GM12878 (cell line): ENCODE measurements at regions of chr6 and their contacts with region 1.

Region 1: GRCh38 chr6:75284632-75285286 is at the start of gene TMEM30A:
- DNase-seq: peak; percentile 100
- ATAC-seq: peak; percentile 80
- H3K4me3 ChIP-seq: peak within 1 kb of the TSS; percentile 94
- H3K27ac ChIP-seq: peak within 1 kb of the TSS; percentile 80
- H3K4me1 ChIP-seq: no peaks in the 10 kb centered on the region
- H3K27me3 ChIP-seq: no peaks in the 10 kb centered on the region
- CTCF ChIP-seq: no peak
- EP300 ChIP-seq: peak in 1 of 2 experiments; percentile 71; a peak in 1 of 4 replicates
- POLR2A ChIP-seq: peak; percentile 96
- RAD21 ChIP-seq: no peak
- polyA plus RNA-seq, gene TMEM30A: 11.9 to 23.1 TPM

Region 2: GRCh38 chr6:74598473-74599393 is 686.0 kb before region 1 on chr6:
- CTCF ChIA-PET with region 1: no interaction called
- POLR2A ChIA-PET with region 1: no interaction called
- RAD21 ChIA-PET with region 1: no interaction called
- SMC1A ChIA-PET with region 1: no interaction called
- in situ Hi-C with region 1: no loop called
- intact Hi-C with region 1: no loop called
- DNase-seq: peak; percentile 81
- ATAC-seq: peak; percentile 94
- H3K4me3 ChIP-seq: peak overlapping the region; percentile 28; the same call in 1 of the 2 replicates
- H3K27ac ChIP-seq: peak overlapping the region; percentile 60
- H3K4me1 ChIP-seq: peaks cover 17% of the 10 kb centered on the region
- H3K27me3 ChIP-seq: no peaks in the 10 kb centered on the region
- CTCF ChIP-seq: no peak
- EP300 ChIP-seq: peak; percentile 96 to 98
- POLR2A ChIP-seq: no peak
- RAD21 ChIP-seq: 0 out of 2 replicates have a peak, but pooled peaks have one; percentile 12

Region 3: GRCh38 chr6:75243333-75244062 is 41.3 kb before region 1 on chr6 and contains the start of gene COX7A2:
- CTCF ChIA-PET with region 1: no interaction called
- POLR2A ChIA-PET with region 1: interaction called, 6 read pairs
- RAD21 ChIA-PET with region 1: interaction called, 5 read pairs
- SMC1A ChIA-PET with region 1: interaction called, 11 read pairs
- in situ Hi-C with region 1: no loop called
- intact Hi-C with region 1: loop called (anchors 1 kb)
- DNase-seq: peak; percentile 86
- ATAC-seq: peak; percentile 94
- H3K4me3 ChIP-seq: peak within 1 kb of the TSS; percentile 65
- H3K27ac ChIP-seq: peak within 1 kb of the TSS; percentile 97
- H3K4me1 ChIP-seq: no peaks in the 10 kb centered on the region
- H3K27me3 ChIP-seq: no peaks in the 10 kb centered on the region
- CTCF ChIP-seq: no peak
- EP300 ChIP-seq: no peak; a peak in 3 of 4 replicates
- POLR2A ChIP-seq: peak; percentile 97
- RAD21 ChIP-seq: no peak
- polyA plus RNA-seq, gene COX7A2: 1,615 to 1,834 TPM

Region 4: GRCh38 chr6:75611702-75612375 is 327.1 kb after region 1 on chr6:
- CTCF ChIA-PET with region 1: no interaction called
- POLR2A ChIA-PET with region 1: no interaction called
- RAD21 ChIA-PET with region 1: no interaction called
- SMC1A ChIA-PET with region 1: no interaction called
- in situ Hi-C with region 1: no loop called
- intact Hi-C with region 1: loop called (anchors 5 kb)
- DNase-seq: no peak
- ATAC-seq: peak; percentile 46
- H3K4me3 ChIP-seq: 0 out of 2 replicates have a peak overlapping the region, but pooled peaks have one; percentile 45
- H3K27ac ChIP-seq: peak overlapping the region; percentile 20; the same call in 1 of the 2 replicates
- H3K4me1 ChIP-seq: peaks cover 34% of the 10 kb centered on the region
- H3K27me3 ChIP-seq: no peaks in the 10 kb centered on the region
- CTCF ChIP-seq: no peak
- EP300 ChIP-seq: no peak
- POLR2A ChIP-seq: no peak
- RAD21 ChIP-seq: no peak

Region 5: DNA sequence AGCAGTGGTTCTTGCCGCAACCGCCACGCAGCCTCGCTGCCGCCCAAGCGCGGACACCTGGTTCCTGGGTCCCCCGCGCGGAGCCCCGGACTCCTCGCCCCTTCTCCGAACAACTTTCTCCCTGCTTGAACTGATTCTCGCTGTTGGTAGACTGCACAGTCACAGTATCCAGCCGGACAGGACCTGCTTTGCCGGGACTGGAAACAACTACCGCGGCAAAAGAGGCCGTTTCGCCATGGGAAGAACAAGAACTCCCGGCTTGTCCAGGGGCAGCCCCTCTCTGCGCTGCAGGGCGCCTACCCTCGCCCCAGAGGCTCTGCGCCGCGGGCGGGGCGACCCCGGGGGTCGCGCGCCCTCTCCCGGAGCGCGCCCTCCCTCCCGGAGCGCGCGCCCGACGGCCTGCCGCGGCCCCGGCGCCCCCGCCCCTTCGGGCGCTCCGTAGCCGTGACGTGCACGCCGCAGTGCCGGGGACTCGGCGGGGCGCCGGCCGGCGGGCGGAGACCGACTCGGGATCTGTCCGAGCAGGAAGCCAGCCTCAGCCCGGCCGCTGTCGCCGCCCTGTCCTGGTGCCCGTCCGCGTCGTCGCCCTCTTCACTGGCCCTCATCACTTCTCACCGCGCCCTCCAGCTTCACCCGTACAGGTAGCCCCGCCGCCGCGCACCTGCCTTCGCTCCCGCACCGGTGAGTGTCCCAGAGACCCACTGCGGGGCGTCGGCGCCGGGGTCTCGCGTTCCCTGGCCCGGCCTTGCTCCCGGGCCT is 464.2 kb after region 1 on chr6 and contains the start of gene MYO6:
- CTCF ChIA-PET with region 1: no interaction called
- POLR2A ChIA-PET with region 1: interaction called, 3 read pairs
- RAD21 ChIA-PET with region 1: no interaction called
- SMC1A ChIA-PET with region 1: no interaction called
- in situ Hi-C with region 1: loop called (anchors 10 kb)
- intact Hi-C with region 1: loop called (anchors 5 kb)
- DNase-seq: no peak
- ATAC-seq: peak; percentile 81
- H3K4me3 ChIP-seq: peak within 1 kb of the TSS; percentile 93
- H3K27ac ChIP-seq: peak within 1 kb of the TSS; percentile 53
- H3K4me1 ChIP-seq: peaks cover 6% of the 10 kb centered on the region
- H3K27me3 ChIP-seq: no peaks in the 10 kb centered on the region
- CTCF ChIP-seq: no peak
- EP300 ChIP-seq: no peak
- POLR2A ChIP-seq: peak; percentile 85
- RAD21 ChIP-seq: no peak
- polyA plus RNA-seq, gene MYO6: 7.9 to 8.0 TPM

Region 6: GRCh38 chr6:75759207-75759606 is 474.4 kb after region 1 on chr6:
- CTCF ChIA-PET with region 1: no interaction called
- POLR2A ChIA-PET with region 1: no interaction called
- RAD21 ChIA-PET with region 1: no interaction called
- SMC1A ChIA-PET with region 1: no interaction called
- in situ Hi-C with region 1: loop called (anchors 10 kb)
- intact Hi-C with region 1: no loop called
- DNase-seq: no peak
- ATAC-seq: peak; percentile 65
- H3K4me3 ChIP-seq: no peak overlapping the region
- H3K27ac ChIP-seq: no peak overlapping the region
- H3K4me1 ChIP-seq: no peaks in the 10 kb centered on the region
- H3K27me3 ChIP-seq: no peaks in the 10 kb centered on the region
- CTCF ChIP-seq: no peak
- EP300 ChIP-seq: no peak
- POLR2A ChIP-seq: no peak
- RAD21 ChIP-seq: no peak